K562 (cell line): ENCODE measurements at regions of chr6 and their contacts with region 1.

Region 1: DNA sequence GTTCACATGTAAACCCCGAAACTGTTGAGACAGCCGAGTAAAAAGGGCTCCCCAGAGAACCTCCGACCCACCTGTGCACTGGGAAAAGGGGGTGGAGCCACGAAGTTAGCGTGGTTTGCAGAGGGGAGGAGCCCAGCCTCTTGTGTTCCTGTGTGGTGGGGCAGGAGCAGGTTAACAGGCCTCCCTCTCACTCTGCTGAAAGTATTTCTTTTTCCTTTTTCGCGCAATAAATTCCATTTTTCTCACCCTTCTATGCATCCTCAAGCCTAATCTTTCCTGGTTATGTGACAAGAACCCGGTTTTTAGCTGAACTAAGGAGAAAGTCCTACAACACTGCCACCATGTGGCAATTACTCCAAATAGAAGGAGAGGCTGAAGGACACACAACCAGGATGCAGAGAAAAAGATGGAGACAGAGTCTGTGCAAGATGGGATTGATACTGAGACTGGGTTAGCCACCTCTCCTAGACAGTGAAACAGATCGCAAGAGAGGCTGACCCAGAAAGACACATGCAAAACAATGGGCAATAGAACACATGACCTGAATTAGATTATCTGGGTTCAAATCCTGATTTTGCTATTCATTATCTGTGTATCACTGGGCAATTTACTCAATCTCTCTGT is 168.7 kb upstream of the PRSS16 start:
- DNase-seq: peak; percentile 48 to 81 (median 59)
- ATAC-seq: peak; percentile 99
- H3K4me3 ChIP-seq: peak overlapping the region; percentile 51
- H3K27ac ChIP-seq: no peak overlapping the region; the same call in 2 of the 3 replicates
- H3K4me1 ChIP-seq: no peaks in the 10 kb centered on the region; a peak in 1 of 5 replicates
- H3K27me3 ChIP-seq: no peaks in the 10 kb centered on the region
- CTCF ChIP-seq: peak; percentile 68 to 94 (median 92)
- EP300 ChIP-seq: 0 out of 2 replicates have a peak, but pooled peaks have one; percentile 5
- POLR2A ChIP-seq: no peak
- RAD21 ChIP-seq: peak; percentile 96 to 98

Region 2: GRCh38 chr6:26329763-26330511 is 748.9 kb before region 1 on chr6:
- CTCF ChIA-PET with region 1: no interaction called
- POLR2A ChIA-PET with region 1: no interaction called
- in situ Hi-C with region 1: no loop called
- intact Hi-C with region 1: loop called (anchors 10 kb)
- DNase-seq: peak in 3 of 4 experiments; percentile 56 to 88 (median 59)
- ATAC-seq: peak; percentile 40
- H3K4me3 ChIP-seq: peak overlapping the region; percentile 49
- H3K27ac ChIP-seq: peak overlapping the region; percentile 62; the same call in 2 of the 3 replicates
- H3K4me1 ChIP-seq: peaks cover 13 to 28% of the 10 kb centered on the region in 2 experiments; a peak in 4 of 5 replicates
- H3K27me3 ChIP-seq: no peaks in the 10 kb centered on the region
- CTCF ChIP-seq: no peak
- EP300 ChIP-seq: peak; percentile 81
- POLR2A ChIP-seq: no peak
- RAD21 ChIP-seq: 0 out of 4 replicates have a peak, but pooled peaks of 1 of the 2 experiments have one; percentile 4

Region 3: DNA sequence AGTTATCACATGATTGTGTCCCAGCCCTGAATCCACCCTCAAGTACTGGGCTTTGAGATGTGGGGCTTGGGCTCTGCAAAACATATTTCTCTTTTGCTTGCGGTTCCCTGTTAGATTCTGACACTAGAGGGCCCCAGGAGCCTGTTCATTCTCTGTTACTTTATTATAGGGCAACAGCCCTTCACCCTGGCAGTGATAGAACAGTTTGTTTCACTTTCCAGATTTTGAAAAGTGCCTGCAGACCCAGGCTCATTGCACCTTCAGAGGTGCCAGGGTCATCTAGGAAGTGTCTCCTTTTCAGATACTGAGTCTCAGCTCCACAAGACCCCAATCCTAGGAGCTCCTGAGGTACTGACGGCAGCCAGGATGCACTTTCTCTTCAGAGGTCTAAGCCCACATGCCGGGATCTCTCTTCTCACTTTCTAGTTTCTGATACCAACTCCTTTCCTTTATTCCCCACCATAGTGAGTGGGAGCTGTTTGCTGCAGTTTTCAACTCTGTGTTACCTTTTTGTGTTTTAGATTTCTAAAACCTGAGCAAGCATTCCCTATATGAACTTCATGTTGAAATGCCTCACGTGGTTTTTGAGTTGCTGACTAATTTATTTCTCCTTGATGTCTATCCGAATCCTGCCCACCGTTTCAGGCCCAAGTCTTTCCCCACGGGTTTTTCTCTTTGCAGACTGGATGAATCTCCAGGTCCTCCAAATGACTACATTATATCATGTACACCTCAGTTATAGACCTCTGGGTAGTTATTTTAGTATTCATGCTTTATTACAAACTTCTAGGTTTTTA is 471.2 kb before region 1 on chr6:
- CTCF ChIA-PET with region 1: interaction called, 23 read pairs
- POLR2A ChIA-PET with region 1: no interaction called
- in situ Hi-C with region 1: no loop called
- intact Hi-C with region 1: loop called (anchors 1 kb)
- DNase-seq: peak; percentile 56 to 81 (median 70)
- ATAC-seq: peak; percentile 96
- H3K4me3 ChIP-seq: no peak overlapping the region
- H3K27ac ChIP-seq: no peak overlapping the region
- H3K4me1 ChIP-seq: peaks cover 0 to 10% of the 10 kb centered on the region in 2 experiments; a peak in 3 of 5 replicates
- H3K27me3 ChIP-seq: no peaks in the 10 kb centered on the region
- CTCF ChIP-seq: peak; percentile 83 to 93 (median 92)
- EP300 ChIP-seq: no peak
- POLR2A ChIP-seq: no peak
- RAD21 ChIP-seq: peak; percentile 96

Region 4: DNA sequence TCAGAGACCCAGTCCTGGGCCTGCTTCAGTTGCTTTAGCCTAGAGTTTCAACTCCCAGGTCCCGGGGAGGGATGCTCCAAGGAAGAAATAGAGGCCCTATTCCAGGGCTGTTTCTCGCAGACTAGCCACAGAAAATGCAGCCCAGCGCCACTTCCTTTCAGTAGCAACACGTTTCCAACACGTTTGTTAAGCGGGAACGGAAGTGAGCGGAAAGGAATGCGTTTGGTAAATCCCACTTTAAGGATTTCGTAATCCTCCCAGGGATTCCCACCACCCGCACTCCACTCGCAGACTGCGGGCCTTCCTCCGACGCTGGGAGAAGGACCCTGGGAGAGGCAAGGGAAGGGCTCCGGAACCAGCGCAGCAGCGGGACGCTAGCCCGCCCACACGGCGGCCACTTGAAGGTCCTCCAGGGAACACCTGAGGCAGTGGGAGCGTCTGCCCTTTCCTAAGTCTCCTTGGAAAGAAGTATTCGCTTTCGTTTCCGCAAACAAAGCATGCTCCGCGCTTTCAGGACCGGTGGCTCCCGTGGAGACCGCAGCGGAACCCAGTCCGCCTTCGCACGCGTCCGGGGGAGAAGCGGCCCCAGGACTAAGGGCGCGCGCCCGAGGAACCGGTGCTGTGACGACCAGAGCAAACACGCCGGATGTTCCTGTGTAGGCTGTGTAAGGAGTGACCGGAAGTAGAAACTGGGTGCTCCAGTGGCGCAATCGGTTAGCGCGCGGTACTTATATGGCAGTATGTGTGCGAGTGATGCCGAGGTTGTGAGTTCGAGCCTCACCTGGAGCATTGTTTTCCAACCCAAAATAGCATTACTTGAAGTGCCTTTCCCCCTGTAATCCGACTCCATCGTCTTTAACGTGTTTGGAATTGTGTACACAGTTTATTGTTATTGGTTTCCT is 58.9 kb before region 1 on chr6:
- CTCF ChIA-PET with region 1: no interaction called
- POLR2A ChIA-PET with region 1: no interaction called
- in situ Hi-C with region 1: no loop called
- intact Hi-C with region 1: loop called (anchors 10 kb)
- DNase-seq: peak; percentile 92 to 98 (median 94)
- ATAC-seq: peak; percentile 97
- H3K4me3 ChIP-seq: peak overlapping the region; percentile 45
- H3K27ac ChIP-seq: peak overlapping the region; percentile 91
- H3K4me1 ChIP-seq: peaks cover 0 to 7% of the 10 kb centered on the region in 2 experiments; a peak in 3 of 5 replicates
- H3K27me3 ChIP-seq: no peaks in the 10 kb centered on the region
- CTCF ChIP-seq: no peak
- EP300 ChIP-seq: peak; percentile 68
- POLR2A ChIP-seq: peak; percentile 99
- RAD21 ChIP-seq: peak; percentile 9 to 15; a peak in 1 of 4 replicates